ENCODE measurements at regions of chr9 and their contacts with region 1.

Region 1: DNA sequence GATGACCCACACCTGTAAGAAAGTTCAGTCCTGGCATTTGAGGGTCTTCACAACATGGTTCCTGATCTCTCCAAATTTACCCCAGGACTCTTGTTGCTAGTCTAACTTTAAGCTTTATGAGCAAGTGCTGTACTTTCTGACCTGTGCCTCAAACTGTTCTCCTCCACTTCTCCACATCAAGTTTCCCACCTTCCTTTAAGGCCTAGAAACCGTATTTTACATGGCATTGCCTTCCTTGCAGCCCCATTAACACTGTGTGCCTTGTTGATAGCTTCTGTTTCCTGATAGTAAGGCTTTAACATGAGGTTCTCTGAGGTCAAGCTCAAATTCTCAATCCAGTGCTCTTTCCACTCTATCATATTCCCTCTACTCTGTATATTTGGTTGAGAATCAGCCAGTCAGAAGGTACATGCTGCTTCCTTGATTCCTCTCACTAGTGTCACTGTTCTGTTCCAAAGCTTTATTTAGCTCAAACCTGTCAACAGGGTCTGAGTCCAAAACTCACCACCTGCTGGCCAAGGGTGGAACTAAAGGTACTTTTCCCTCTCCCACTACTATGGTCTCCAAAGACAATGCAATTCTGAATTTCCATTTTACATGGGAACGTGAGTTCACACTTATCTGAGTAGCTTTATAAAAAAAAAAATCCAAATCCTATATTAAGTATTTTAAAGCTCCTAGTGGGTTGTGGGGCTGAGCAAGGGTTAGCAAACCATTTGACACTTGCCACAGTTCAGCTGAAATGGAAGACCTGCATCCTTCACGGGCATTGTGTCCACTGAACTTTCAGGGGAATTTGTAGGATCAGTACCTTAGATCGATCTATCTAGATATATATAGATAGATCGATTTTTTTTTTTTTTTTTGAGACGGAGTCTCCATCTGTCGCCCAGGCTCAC is 21.1 kb downstream of the VCP start:
- DNase-seq: no peak
- H3K4me3 ChIP-seq: no peak overlapping the region
- H3K27ac ChIP-seq: peak overlapping the region; percentile 63 to 78 (median 71)
- H3K4me1 ChIP-seq: peaks cover 6 to 9% (median 8%) of the 10 kb centered on the region in 4 donors
- H3K27me3 ChIP-seq: no peaks in the 10 kb centered on the region
- CTCF ChIP-seq: peak; percentile 63 to 78 (median 73)
- EP300 ChIP-seq: no peak
- POLR2A ChIP-seq: no peak

Region 2: GRCh38 chr9:35258676-35259474 is 207.6 kb after region 1 on chr9:
- intact Hi-C with region 1: loop called (anchors 5 kb)
- DNase-seq: no peak
- H3K4me3 ChIP-seq: no peak overlapping the region
- H3K27ac ChIP-seq: no peak overlapping the region
- H3K4me1 ChIP-seq: no peaks in the 10 kb centered on the region
- H3K27me3 ChIP-seq: no peaks in the 10 kb centered on the region
- CTCF ChIP-seq: peak; percentile 51 to 70 (median 61)
- EP300 ChIP-seq: no peak
- POLR2A ChIP-seq: no peak